ENCODE measurements at regions of chr17 and their contacts with region 1.

Region 1: GRCh38 chr17:1573916-1574696 is 11.5 kb upstream of the PITPNA start:
- DNase-seq: peak; percentile 85 to 91
- ATAC-seq: peak; percentile 63 to 83 (median 72)
- H3K4me3 ChIP-seq: peak overlapping the region in 1 of 10 donors; percentile 6
- H3K27ac ChIP-seq: peak overlapping the region in 9 of 10 donors; percentile 55 to 94 (median 69)
- H3K4me1 ChIP-seq: peaks cover 26 to 54% (median 46%) of the 10 kb centered on the region in 9 donors
- H3K27me3 ChIP-seq: no peaks in the 10 kb centered on the region
- CTCF ChIP-seq: peak; percentile 95 to 99 (median 97)

Region 2: GRCh38 chr17:1628856-1629646 is 54.9 kb after region 1 on chr17:
- intact Hi-C with region 1: loop called (anchors 1 to 5 kb)
- DNase-seq: peak; percentile 92 to 95
- ATAC-seq: peak; percentile 84 to 92 (median 90)
- H3K4me3 ChIP-seq: peak overlapping the region; percentile 73 to 93 (median 80)
- H3K27ac ChIP-seq: peak overlapping the region; percentile 68 to 99 (median 92)
- H3K4me1 ChIP-seq: peaks cover 3 to 54% (median 21%) of the 10 kb centered on the region in 9 donors
- H3K27me3 ChIP-seq: no peaks in the 10 kb centered on the region
- CTCF ChIP-seq: peak in 8 of 9 donors; percentile 35 to 73 (median 48)

Region 3: DNA sequence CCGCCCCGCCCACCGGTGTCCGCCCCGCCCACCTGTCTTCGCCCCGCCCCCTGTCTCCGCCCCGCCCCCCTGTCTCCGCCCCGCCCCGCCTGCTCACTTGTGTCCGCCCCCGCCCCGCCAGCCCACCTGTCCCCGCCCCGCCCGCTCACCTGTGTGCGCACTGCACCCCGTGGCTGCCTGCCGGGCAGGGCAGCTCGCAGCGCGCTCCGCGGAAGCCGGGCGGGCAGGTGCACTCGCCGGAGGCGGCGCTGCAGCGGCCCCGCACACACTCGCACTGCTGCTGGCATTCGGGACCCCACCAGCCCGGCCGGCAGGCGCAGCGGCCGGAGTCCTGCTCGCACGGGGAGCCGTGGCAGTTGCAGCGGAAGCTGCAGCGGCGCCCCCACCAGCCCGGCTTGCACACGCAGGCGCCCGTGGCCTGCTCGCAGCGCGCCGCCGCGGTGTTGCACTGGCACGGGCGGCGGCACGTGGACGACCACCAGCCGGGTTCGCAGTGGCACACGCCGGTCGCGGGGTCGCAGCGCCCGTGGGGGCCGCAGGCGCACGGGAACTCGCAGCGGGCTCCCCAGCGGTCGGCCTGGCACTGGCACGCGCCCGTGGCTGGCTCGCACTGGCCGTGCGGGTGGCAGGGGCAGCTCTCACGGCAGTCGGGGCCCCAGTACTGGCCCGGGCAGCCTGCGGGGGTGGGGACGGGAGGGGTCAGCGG is 69.3 kb after region 1 on chr17:
- intact Hi-C with region 1: loop called in 7 of 10 experiments (anchors 2 to 5 kb)
- DNase-seq: peak in 1 of 2 donors; percentile 41
- ATAC-seq: peak in 2 of 8 donors; percentile 3 to 6
- H3K4me3 ChIP-seq: peak overlapping the region; percentile 1 to 68 (median 56)
- H3K27ac ChIP-seq: peak overlapping the region; percentile 66 to 95 (median 89)
- H3K4me1 ChIP-seq: peaks cover 36 to 65% (median 46%) of the 10 kb centered on the region in 9 donors
- H3K27me3 ChIP-seq: no peaks in the 10 kb centered on the region
- CTCF ChIP-seq: peak in 2 of 9 donors; percentile 19

Measured in heart right ventricle (tissue), 16 donors.